AG04450 (cell line): ENCODE measurements at regions of chr6 and their contacts with region 1.

Region 1: DNA sequence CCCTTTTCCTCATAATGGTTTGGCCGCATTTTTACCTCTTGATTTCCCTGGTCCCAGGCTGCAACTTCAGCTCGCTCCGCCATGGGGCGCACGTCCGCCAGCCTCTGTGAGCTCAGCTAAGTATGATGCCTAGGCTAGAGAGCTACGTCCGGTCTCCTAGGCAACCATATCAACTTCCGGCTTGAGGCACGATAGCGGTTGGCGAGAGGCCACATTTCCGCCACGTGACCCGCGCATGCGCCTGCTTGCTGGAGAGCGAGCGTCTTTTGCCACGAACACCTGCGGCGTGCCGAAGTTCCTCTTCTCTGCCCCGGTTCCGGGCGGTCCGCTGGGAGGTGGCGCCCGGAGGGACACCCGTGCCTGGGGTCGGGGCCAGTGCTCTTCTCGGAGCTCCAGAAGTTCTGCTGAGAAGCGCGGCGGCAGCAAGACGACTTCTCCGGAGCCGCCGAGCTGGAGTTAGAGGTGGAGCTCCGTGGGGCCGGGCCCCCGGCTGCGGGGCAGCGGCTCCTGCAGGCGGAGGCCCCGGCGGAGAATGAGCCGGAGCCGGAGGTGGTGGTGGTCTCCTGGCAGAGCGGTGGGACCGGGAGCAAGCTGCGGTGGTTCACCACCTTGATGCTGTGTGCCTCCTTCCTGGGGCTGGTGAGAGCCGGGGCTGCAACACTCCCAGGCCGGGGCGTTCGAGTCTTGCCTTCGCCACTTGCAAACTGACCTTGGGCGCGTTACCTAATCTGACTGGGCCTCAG is 172.0 kb downstream of the SLC16A10 start:
- DNase-seq: peak; percentile 99
- H3K4me3 ChIP-seq: peak overlapping the region; percentile 88
- H3K27ac ChIP-seq: peak overlapping the region; percentile 91
- H3K27me3 ChIP-seq: no peaks in the 10 kb centered on the region
- CTCF ChIP-seq: peak; percentile 92

Region 2: DNA sequence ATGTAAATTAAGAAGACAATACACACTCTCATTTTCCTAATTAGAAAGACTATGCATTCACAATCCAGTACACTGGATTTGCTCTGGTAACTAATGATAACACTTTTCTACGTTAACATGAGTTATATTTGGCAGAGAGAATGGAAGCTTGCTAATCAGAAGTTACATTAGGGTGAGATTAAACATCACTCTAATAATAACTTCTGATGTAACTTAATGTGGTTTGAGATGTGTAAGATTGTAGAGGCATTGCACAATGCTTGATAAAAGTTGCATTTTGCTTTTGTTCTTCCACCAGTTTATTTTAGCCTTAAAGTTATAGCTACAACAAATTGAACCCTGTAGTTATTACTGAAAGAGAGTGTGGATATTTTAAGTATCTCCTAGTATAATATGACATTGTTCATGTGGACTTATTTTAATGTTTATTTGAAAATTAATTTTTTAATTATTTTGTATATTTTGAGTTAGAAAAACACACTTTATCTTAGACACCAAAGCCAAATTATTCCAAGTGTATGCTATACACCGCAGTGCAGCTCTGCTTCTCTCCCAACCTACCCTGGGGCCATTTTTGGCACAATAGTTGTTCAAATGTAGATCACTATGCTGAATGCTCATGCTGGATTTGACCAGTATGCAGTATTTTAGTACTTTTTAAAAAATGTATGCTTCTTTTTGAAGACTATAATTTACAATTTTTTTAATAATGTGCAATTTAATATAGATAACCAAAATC is 28.7 kb before region 1 on chr6:
- CTCF ChIA-PET with region 1: interaction called, 17 read pairs
- POLR2A ChIA-PET with region 1: interaction called, 3 read pairs
- DNase-seq: no peak
- H3K4me3 ChIP-seq: no peak overlapping the region
- H3K27ac ChIP-seq: peak overlapping the region; percentile 66
- H3K27me3 ChIP-seq: no peaks in the 10 kb centered on the region
- CTCF ChIP-seq: no peak

Region 3: GRCh38 chr6:111242452-111242851 is 16.8 kb before region 1 on chr6:
- CTCF ChIA-PET with region 1: interaction called, 11 read pairs
- POLR2A ChIA-PET with region 1: interaction called, 3 read pairs
- DNase-seq: no peak
- H3K4me3 ChIP-seq: no peak overlapping the region
- H3K27ac ChIP-seq: no peak overlapping the region
- H3K27me3 ChIP-seq: no peaks in the 10 kb centered on the region
- CTCF ChIP-seq: no peak

Region 4: DNA sequence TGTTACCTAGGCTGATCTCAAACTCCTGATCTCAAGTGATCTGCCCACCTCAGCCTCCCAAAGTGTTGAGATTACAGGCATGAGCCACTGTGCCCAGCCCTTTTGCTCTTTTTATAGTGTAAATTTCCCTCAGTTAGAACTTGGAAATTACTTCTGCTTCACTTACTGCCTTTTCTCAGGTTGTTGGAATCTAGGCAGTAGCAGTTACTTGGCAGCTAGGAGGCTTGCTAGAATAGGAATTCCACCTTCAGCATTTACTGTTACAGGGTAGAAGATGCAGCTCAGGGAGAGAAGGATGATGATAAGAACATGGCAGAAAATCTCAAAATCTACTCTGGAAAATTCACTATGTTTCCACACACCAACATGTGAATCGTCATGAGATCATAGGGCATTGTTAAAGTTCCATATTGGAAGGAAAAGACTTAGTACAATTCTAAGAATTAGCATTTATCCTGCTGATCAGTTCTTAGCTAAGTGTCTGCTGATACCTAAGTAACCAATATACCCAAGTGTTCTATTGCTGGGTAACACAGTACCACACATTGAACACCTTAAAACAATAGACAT is 10.2 kb after region 1 on chr6:
- CTCF ChIA-PET with region 1: interaction called, 28 read pairs
- POLR2A ChIA-PET with region 1: no interaction called
- DNase-seq: no peak
- H3K4me3 ChIP-seq: no peak overlapping the region
- H3K27ac ChIP-seq: no peak overlapping the region
- H3K27me3 ChIP-seq: no peaks in the 10 kb centered on the region
- CTCF ChIP-seq: no peak

Region 5: GRCh38 chr6:111478749-111479148 is 219.5 kb after region 1 on chr6:
- CTCF ChIA-PET with region 1: interaction called, 15 read pairs
- POLR2A ChIA-PET with region 1: interaction called, 5 read pairs
- DNase-seq: no peak
- H3K4me3 ChIP-seq: no peak overlapping the region
- H3K27ac ChIP-seq: no peak overlapping the region
- H3K27me3 ChIP-seq: no peaks in the 10 kb centered on the region
- CTCF ChIP-seq: peak; percentile 56

Region 6: DNA sequence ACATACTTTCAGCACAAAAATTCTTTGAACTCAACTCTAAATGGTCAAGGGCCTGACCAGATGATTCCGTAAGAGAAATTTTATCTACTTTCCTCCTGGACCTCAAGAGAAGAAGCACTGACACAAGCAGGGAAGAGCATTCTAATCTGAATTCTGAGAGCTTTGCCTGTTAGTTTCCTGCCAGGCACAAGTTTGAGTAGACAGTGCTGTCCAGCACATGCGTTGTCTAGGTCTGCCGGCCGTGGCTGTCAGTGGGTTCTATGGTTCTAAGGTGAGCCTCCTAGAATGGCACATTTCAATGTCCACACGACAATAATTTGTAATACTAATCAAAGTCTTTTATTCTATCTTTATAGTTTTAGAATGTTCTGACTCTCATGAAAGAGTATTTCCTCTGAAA is 1179.8 kb after region 1 on chr6:
- CTCF ChIA-PET with region 1: no interaction called
- POLR2A ChIA-PET with region 1: no interaction called
- DNase-seq: no peak
- H3K4me3 ChIP-seq: no peak overlapping the region
- H3K27ac ChIP-seq: no peak overlapping the region
- H3K27me3 ChIP-seq: no peaks in the 10 kb centered on the region
- CTCF ChIP-seq: no peak